PC-9 (cell line): ENCODE measurements at regions of chr16 and their contacts with region 1.

Region 1: GRCh38 chr16:26041952-26042668 is 350.4 kb downstream of the HS3ST4 start:
- DNase-seq: no peak
- H3K4me3 ChIP-seq: no peak overlapping the region
- H3K27ac ChIP-seq: no peak overlapping the region
- H3K4me1 ChIP-seq: no peaks in the 10 kb centered on the region
- H3K27me3 ChIP-seq: peaks cover 8% of the 10 kb centered on the region; the same call in 1 of the 2 replicates
- CTCF ChIP-seq: no peak

Region 2: GRCh38 chr16:26031286-26031685 is 10.8 kb before region 1 on chr16:
- CTCF ChIA-PET with region 1: no interaction called
- POLR2A ChIA-PET with region 1: interaction called, 10 read pairs
- intact Hi-C with region 1: no loop called
- DNase-seq: no peak
- H3K4me3 ChIP-seq: no peak overlapping the region
- H3K27ac ChIP-seq: no peak overlapping the region
- H3K4me1 ChIP-seq: no peaks in the 10 kb centered on the region
- H3K27me3 ChIP-seq: peaks cover 24% of the 10 kb centered on the region
- CTCF ChIP-seq: no peak